Breast epithelium (tissue), 4 donors: ENCODE measurements at regions of chr20 and their contacts with region 1.

Region 1: DNA sequence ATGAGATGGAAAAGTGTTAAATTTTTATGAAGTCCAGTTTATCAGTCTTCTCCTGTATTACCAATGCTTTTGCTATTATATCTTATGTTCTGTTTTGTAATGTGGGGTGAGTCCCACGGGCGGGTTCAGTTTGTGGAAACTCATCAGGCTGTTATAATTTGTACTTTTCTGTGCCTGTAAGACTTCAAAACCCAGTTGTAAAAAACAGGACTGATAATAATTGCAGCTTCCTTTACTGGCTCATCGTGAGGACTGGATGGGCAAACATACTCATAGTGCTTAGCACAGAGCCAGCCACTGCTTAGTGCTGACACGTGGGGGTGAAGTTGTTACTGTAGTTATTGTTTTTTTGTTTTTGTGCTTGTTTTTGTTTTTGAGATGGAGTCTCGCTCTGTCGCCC is 45.6 kb downstream of the TGM2 start:
- DNase-seq: no peak
- H3K4me3 ChIP-seq: no peak overlapping the region
- H3K27ac ChIP-seq: no peak overlapping the region
- H3K4me1 ChIP-seq: no peaks in the 10 kb centered on the region
- H3K27me3 ChIP-seq: no peaks in the 10 kb centered on the region
- CTCF ChIP-seq: no peak
- POLR2A ChIP-seq: no peak

Region 2: DNA sequence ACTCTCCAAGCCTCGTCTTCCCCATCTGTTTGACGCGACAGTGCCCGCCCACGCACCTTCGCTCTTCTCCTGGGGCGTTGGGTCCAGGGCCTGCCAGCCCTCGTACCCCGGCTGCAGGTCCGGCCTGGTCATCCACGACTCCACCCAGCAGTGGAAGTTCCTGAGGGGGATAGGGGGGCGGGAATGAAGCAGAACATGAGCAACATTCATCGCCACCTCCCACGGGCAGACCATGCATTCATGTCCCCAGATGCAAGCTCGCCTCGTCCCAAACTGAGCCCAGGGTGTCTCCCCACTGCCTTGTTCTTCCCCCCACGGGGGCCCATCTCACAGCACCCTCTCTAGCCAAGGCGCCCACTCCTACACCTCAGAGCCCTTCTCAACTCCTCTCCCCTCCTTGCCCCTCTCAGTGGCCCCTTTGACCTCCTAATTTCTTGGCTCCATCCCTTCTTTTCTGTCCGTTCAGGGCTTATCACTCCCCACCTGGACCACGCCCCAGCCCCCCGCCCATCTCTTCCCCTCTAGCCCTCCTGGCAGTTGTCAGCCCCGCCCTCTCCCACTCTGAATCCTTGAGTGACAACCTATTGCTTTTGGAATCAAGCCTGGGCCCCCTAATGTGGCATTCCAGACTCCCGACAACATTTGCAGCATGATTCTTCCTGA is 21.9 kb after region 1 on chr20:
- intact Hi-C with region 1: loop called (anchors 1 kb)
- DNase-seq: no peak
- H3K4me3 ChIP-seq: no peak overlapping the region
- H3K27ac ChIP-seq: no peak overlapping the region
- H3K4me1 ChIP-seq: no peaks in the 10 kb centered on the region
- H3K27me3 ChIP-seq: no peaks in the 10 kb centered on the region
- CTCF ChIP-seq: no peak
- POLR2A ChIP-seq: no peak